SK-N-SH (cell line): ENCODE measurements at regions of chr1 and their contacts with region 1.

Region 1: GRCh38 chr1:67760030-67760821 is 73.0 kb downstream of the GNG12 start:
- DNase-seq: peak; percentile 56
- H3K4me3 ChIP-seq: peak overlapping the region in 1 of 2 experiments; percentile 4; a peak in 1 of 4 replicates
- H3K27ac ChIP-seq: peak overlapping the region; percentile 51 to 74; a peak in 3 of 4 replicates
- H3K4me1 ChIP-seq: peaks cover 5 to 10% of the 10 kb centered on the region in 2 experiments; a peak in 3 of 4 replicates
- H3K27me3 ChIP-seq: no peaks in the 10 kb centered on the region
- CTCF ChIP-seq: peak; percentile 94
- EP300 ChIP-seq: no peak
- RAD21 ChIP-seq: peak; percentile 87

Region 2: GRCh38 chr1:67524143-67525052 is 235.8 kb before region 1 on chr1:
- CTCF ChIA-PET with region 1: interaction called, 70 read pairs
- POLR2A ChIA-PET with region 1: no interaction called
- DNase-seq: no peak
- H3K4me3 ChIP-seq: no peak overlapping the region
- H3K27ac ChIP-seq: no peak overlapping the region
- H3K4me1 ChIP-seq: no peaks in the 10 kb centered on the region
- H3K27me3 ChIP-seq: no peaks in the 10 kb centered on the region
- CTCF ChIP-seq: peak; percentile 35
- EP300 ChIP-seq: no peak
- RAD21 ChIP-seq: no peak

Region 3: DNA sequence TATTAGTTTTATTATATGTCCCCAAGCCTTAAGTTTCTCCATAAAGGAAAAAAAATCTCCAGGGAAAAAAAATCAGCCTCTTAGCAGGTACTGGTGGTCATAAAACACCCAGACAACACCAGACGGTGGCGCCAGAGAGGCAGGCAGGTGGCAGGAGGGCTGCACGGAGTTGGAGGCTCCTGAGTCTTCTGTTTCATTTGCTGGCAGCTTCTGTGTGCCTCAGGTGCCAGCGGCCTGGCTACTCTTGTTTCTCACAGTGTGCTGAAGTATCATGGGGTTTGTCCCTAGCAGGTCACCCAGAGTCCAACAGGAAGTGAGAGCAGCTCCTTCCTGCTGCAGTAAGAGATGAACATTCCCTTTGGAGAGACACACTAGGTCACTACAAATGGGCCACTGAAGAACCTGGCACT is 198.5 kb before region 1 on chr1:
- CTCF ChIA-PET with region 1: interaction called, 216 read pairs
- POLR2A ChIA-PET with region 1: interaction called, 3 read pairs
- DNase-seq: peak; percentile 84
- H3K4me3 ChIP-seq: peak overlapping the region in 1 of 2 experiments; percentile 18; a peak in 1 of 4 replicates
- H3K27ac ChIP-seq: no peak overlapping the region
- H3K4me1 ChIP-seq: peaks cover 0 to 6% of the 10 kb centered on the region in 2 experiments; a peak in 1 of 4 replicates
- H3K27me3 ChIP-seq: no peaks in the 10 kb centered on the region
- CTCF ChIP-seq: peak; percentile 94
- EP300 ChIP-seq: no peak; a peak in 1 of 4 replicates
- RAD21 ChIP-seq: peak; percentile 96

Region 4: GRCh38 chr1:67664048-67664447 is 96.2 kb before region 1 on chr1:
- CTCF ChIA-PET with region 1: interaction called, 10 read pairs
- POLR2A ChIA-PET with region 1: no interaction called
- DNase-seq: no peak
- H3K4me3 ChIP-seq: no peak overlapping the region
- H3K27ac ChIP-seq: no peak overlapping the region
- H3K4me1 ChIP-seq: no peaks in the 10 kb centered on the region; a peak in 1 of 4 replicates
- H3K27me3 ChIP-seq: no peaks in the 10 kb centered on the region
- CTCF ChIP-seq: no peak
- EP300 ChIP-seq: no peak
- RAD21 ChIP-seq: no peak

Region 5: DNA sequence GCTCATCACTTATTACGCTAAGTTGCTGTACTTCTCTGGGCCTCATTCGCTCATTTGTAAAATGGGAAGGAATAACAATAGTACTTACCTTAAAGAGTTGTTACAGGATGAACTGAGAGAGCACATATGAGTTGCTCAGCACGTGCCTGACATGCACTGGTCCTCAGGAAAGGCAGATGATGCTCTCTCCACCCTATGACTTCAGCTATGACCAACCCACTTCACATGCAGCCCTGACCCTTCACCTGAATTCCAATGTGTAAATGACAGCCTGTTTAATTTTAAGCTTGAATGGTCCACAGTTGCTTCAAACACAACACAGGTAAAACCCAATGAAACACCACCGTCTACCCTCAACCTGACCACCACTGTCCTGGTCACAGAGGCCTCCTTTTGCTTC is 42.4 kb before region 1 on chr1:
- CTCF ChIA-PET with region 1: interaction called, 19 read pairs
- POLR2A ChIA-PET with region 1: no interaction called
- DNase-seq: no peak
- H3K4me3 ChIP-seq: no peak overlapping the region
- H3K27ac ChIP-seq: no peak overlapping the region
- H3K4me1 ChIP-seq: peaks cover 46 to 53% of the 10 kb centered on the region in 2 experiments
- H3K27me3 ChIP-seq: no peaks in the 10 kb centered on the region
- CTCF ChIP-seq: no peak
- EP300 ChIP-seq: no peak
- RAD21 ChIP-seq: no peak

Region 6: GRCh38 chr1:67747667-67748546 is 12.3 kb before region 1 on chr1:
- CTCF ChIA-PET with region 1: interaction called, 18 read pairs
- POLR2A ChIA-PET with region 1: interaction called, 4 read pairs
- DNase-seq: no peak
- H3K4me3 ChIP-seq: no peak overlapping the region
- H3K27ac ChIP-seq: peak overlapping the region; percentile 74 to 75; a peak in 2 of 4 replicates
- H3K4me1 ChIP-seq: peaks cover 10 to 60% of the 10 kb centered on the region in 2 experiments
- H3K27me3 ChIP-seq: no peaks in the 10 kb centered on the region
- CTCF ChIP-seq: no peak
- EP300 ChIP-seq: 0 out of 4 replicates have a peak, but pooled peaks of 1 of the 2 experiments have one; percentile 10
- RAD21 ChIP-seq: no peak